GM12878 (cell line): ENCODE measurements at regions of chr10 and their contacts with region 1.

Region 1: GRCh38 chr10:132551093-132551807 is 13.7 kb downstream of the INPP5A start:
- DNase-seq: no peak
- ATAC-seq: peak; percentile 77
- H3K4me3 ChIP-seq: no peak overlapping the region
- H3K27ac ChIP-seq: no peak overlapping the region; the same call in 1 of the 2 replicates
- H3K4me1 ChIP-seq: peaks cover 30% of the 10 kb centered on the region
- H3K27me3 ChIP-seq: no peaks in the 10 kb centered on the region; a peak in 1 of 4 replicates
- CTCF ChIP-seq: peak in 1 of 3 experiments; percentile 8; a peak in 2 of 6 replicates
- EP300 ChIP-seq: no peak
- POLR2A ChIP-seq: peak; percentile 70
- RAD21 ChIP-seq: peak; percentile 23; the same call in 1 of the 2 replicates

Region 2: GRCh38 chr10:132193907-132194552 is 357.2 kb before region 1 on chr10:
- CTCF ChIA-PET with region 1: no interaction called
- POLR2A ChIA-PET with region 1: no interaction called
- RAD21 ChIA-PET with region 1: no interaction called
- SMC1A ChIA-PET with region 1: no interaction called
- in situ Hi-C with region 1: no loop called
- intact Hi-C with region 1: no loop called
- DNase-seq: no peak
- ATAC-seq: no peak
- H3K4me3 ChIP-seq: no peak overlapping the region
- H3K27ac ChIP-seq: no peak overlapping the region
- H3K4me1 ChIP-seq: no peaks in the 10 kb centered on the region
- H3K27me3 ChIP-seq: no peaks in the 10 kb centered on the region
- CTCF ChIP-seq: no peak
- EP300 ChIP-seq: no peak
- POLR2A ChIP-seq: no peak
- RAD21 ChIP-seq: no peak

Region 3: GRCh38 chr10:132458593-132459300 is 92.5 kb before region 1 on chr10:
- CTCF ChIA-PET with region 1: interaction called, 9 read pairs
- POLR2A ChIA-PET with region 1: no interaction called
- RAD21 ChIA-PET with region 1: interaction called, 6 read pairs
- SMC1A ChIA-PET with region 1: interaction called, 11 read pairs
- in situ Hi-C with region 1: no loop called
- intact Hi-C with region 1: no loop called
- DNase-seq: no peak
- ATAC-seq: peak; percentile 90
- H3K4me3 ChIP-seq: no peak overlapping the region
- H3K27ac ChIP-seq: no peak overlapping the region
- H3K4me1 ChIP-seq: no peaks in the 10 kb centered on the region
- H3K27me3 ChIP-seq: no peaks in the 10 kb centered on the region; a peak in 2 of 4 replicates
- CTCF ChIP-seq: peak; percentile 82 to 95 (median 90)
- EP300 ChIP-seq: no peak
- POLR2A ChIP-seq: no peak
- RAD21 ChIP-seq: peak; percentile 87

Region 4: DNA sequence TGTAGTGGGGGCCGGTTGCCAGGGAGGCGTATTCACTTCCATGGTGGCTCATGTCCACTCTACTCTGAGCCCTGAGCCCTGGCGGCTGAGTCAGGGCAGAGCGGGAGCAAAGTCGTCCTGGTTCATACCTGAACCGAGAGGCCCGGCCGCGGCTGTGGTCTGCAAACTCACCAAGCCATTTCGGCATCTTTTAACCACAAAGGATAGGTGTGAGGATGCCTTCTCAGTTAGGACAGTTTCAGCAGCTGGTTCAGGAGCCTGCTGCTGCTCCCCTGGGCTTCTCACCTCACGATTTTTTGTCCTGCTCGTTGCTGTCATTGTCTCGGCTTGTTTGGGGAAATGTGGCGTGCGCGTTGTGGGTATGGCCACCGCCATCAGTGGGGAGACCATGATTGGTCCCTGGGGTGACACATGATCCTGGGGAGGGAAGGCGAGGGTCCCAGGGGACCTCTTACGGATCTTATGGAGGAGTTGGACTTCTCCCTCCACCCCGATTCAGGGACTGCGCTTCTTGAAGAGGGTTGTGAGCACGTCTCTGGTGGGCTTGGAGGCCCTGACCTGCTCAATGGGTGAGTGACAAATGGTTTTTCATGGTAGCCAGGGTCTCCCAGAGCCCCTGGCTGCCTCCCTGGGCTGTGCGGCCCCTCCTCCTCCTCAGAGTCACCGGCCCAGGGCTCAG is 12.7 kb after region 1 on chr10:
- CTCF ChIA-PET with region 1: interaction called, 9 read pairs
- POLR2A ChIA-PET with region 1: interaction called, 3 read pairs
- RAD21 ChIA-PET with region 1: interaction called, 3 read pairs
- SMC1A ChIA-PET with region 1: interaction called, 12 read pairs
- in situ Hi-C with region 1: no loop called
- intact Hi-C with region 1: no loop called
- DNase-seq: peak; percentile 76
- ATAC-seq: peak; percentile 94
- H3K4me3 ChIP-seq: peak overlapping the region; percentile 40; the same call in 1 of the 2 replicates
- H3K27ac ChIP-seq: no peak overlapping the region
- H3K4me1 ChIP-seq: peaks cover 40% of the 10 kb centered on the region
- H3K27me3 ChIP-seq: no peaks in the 10 kb centered on the region
- CTCF ChIP-seq: peak in 1 of 3 experiments; percentile 22; a peak in 1 of 6 replicates
- EP300 ChIP-seq: peak; percentile 64 to 90; a peak in 2 of 4 replicates
- POLR2A ChIP-seq: no peak
- RAD21 ChIP-seq: no peak